HEK293T (cell line): ENCODE measurements at regions of chr18 and their contacts with region 1.

Region 1: DNA sequence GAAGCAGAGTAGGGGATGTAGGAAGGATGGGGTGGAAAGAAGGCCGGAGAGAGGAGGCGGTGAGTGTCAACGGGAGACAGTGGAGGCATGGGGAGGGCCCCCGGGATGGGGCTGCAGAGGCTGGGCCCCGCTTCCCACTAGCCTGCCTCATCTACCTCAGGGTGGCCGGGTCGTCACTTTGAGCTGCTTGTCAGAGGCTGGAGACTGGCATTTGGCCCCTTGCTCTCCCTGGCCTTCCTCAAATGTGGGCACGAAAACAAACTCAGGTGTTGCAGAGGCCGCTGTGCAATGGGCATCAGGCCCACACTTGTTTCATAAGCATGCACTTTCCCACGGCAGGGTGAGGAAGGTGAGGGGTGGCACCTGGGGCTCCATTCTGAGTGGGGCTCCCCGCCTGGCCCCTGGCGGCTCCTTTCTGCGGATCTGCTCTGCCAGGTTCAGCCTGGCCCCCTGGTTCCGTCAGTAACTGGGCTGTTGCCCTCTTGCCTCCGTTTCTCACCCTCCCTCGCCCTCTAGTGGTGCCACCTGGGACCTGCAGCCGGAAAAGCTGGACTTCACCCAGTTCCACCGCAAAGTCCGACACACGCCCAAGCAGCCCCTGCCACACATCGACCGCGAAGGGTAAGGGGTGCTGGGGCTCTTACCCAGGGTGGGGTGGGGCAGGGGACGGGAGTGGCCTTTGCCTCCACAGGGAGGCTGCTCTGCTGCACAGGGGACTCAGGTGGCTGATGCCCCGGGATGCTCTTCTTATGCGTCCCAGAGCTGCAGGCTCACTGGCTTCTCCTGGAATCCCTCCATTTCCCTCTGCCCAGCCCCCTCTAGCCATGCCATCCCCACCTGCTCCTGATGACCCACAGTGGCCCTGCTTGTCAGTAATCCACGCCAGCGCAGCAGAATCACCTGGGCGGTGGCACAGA is 125.4 kb downstream of the CTIF start:
- DNase-seq: peak; percentile 74

Region 2: GRCh38 chr18:48475635-48476549 is 188.3 kb before region 1 on chr18:
- CTCF ChIA-PET with region 1: interaction called, 14 read pairs
- POLR2A ChIA-PET with region 1: no interaction called
- DNase-seq: peak; percentile 63